ENCODE measurements at regions of chr6 and their contacts with region 1.

Region 1: GRCh38 chr6:32223258-32224235 is at the start of gene NOTCH4:
- DNase-seq: no peak
- H3K4me3 Mint-ChIP-seq: no peak within 1 kb of the TSS
- H3K27ac Mint-ChIP-seq: no peak within 1 kb of the TSS
- H3K4me1 Mint-ChIP-seq: no peaks in the 10 kb centered on the region
- H3K27me3 Mint-ChIP-seq: peaks cover 54% of the 10 kb centered on the region
- CTCF ChIP-seq: no peak
- total RNA-seq, gene NOTCH4: 4.7 and 5.7 TPM in 2 replicates

Region 2: DNA sequence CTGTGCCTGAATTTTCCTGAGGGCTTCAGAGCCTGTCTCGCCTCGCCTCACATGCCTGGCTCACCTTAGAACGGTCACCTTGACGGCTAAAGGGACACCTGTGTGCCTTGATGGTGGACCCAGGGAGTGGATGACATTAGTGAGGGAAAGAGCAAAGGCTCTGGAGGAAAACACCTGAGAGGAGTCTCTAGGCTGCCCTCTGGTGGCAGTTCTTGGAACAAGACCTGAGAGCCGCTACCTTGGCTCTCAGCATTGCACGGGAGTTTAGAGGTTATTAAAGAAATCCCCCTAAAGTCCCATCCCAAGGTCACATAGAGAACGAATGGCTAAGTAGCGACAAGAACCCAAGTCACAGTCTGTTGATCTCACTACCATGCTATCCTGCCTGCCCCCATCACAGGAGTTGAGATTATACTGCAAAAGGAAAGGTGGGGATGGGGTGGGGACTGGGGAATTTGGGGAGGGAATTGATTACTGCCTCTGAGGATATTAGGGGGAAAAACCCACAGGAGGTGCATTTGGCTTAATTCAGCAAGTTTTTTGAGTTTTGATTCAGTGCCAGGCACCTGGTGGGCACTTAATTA is 1095.4 kb before region 1 on chr6:
- CTCF ChIA-PET with region 1: no interaction called
- intact Hi-C with region 1: no loop called
- DNase-seq: peak; percentile 92
- H3K4me3 Mint-ChIP-seq: no peak overlapping the region
- H3K27ac Mint-ChIP-seq: peak overlapping the region; percentile 45
- H3K4me1 Mint-ChIP-seq: peaks cover 50% of the 10 kb centered on the region
- H3K27me3 Mint-ChIP-seq: no peaks in the 10 kb centered on the region
- CTCF ChIP-seq: peak; percentile 99

Region 3: DNA sequence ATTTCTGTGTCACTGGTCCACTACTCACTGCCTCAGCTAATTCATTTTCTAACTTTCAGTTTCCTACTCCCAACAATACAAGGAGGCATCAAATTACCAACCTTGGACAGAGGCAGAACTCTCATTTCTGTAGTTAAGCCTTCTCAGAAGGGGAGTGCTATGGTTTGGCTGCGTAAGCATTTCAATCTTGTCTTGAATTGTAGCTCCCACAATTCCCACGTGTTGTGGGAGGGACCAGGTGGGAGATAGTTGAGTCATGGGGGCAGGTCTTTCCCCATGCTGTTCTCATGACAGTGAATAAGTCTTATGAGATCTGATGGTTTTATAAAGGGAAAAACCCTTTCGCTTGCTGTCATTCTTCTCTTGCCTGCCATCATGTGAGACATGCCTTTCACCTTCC is 239.1 kb after region 1 on chr6:
- CTCF ChIA-PET with region 1: no interaction called
- intact Hi-C with region 1: no loop called
- DNase-seq: no peak
- H3K4me3 Mint-ChIP-seq: no peak overlapping the region
- H3K27ac Mint-ChIP-seq: no peak overlapping the region
- H3K4me1 Mint-ChIP-seq: no peaks in the 10 kb centered on the region
- H3K27me3 Mint-ChIP-seq: peaks cover 53% of the 10 kb centered on the region
- CTCF ChIP-seq: no peak

Region 4: DNA sequence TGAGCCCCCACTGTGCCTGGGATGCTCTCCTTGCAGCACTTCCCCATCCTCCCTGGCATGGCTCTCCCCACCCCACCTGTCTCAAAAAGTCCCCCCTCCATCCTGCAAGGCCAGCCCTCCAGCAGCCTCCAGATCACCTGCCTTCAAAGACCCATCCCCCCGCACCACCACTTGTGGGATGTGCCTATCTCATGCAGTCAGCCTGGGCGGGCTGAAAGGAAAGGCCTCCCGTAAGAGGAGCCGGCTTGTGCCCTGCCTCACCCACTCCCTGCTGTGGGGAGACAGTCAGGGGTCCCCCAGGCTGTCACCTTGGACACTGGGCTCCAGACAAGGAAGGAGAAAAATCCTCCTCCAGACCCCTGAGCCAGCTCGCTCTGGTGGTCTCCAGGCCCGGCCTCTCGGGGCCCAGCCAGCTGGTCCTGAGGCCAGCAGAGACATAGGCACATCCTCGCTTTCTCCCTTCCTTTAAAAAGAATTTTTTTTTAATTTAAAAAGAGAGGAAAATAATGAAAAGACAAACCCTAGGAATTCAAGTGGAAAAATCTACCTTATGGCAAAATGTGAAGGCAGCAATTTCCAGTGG is 1845.0 kb after region 1 on chr6:
- CTCF ChIA-PET with region 1: interaction called, 10 read pairs
- intact Hi-C with region 1: no loop called
- DNase-seq: no peak
- H3K4me3 Mint-ChIP-seq: no peak overlapping the region
- H3K27ac Mint-ChIP-seq: no peak overlapping the region
- H3K4me1 Mint-ChIP-seq: no peaks in the 10 kb centered on the region
- H3K27me3 Mint-ChIP-seq: peaks cover 46% of the 10 kb centered on the region
- CTCF ChIP-seq: no peak